A673 (cell line): ENCODE measurements at regions of chr11 and their contacts with region 1.

Region 1: DNA sequence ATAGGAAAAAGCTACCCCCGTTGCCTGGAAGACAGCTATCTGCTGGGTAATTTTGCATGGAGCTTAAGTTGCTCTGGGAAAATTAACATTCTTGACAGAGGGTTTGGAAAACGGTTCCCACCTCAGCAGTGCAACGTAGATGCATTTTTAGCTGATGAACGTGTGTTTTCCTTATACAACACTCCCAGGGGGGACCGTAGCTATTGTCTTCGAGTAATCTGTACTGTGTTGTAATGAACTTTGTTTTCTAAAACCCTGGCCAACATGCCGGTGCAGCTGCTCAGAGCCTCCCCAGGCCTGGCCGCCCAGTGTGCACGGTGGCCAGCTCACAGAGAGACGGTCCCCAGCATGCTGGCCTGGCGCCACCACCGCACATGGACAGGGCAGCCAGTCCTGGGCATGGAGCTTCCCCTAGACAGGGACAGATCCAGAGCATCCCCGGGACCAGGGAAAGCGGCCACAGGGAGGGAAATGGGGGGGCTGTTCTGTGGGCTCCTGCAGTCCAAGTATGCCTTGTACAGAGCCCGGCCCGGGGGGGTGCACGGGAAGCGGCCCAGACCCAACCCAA is 2.2 kb downstream of the TNNT3 start:
- DNase-seq: no peak
- H3K4me3 ChIP-seq: no peak overlapping the region
- H3K27ac ChIP-seq: no peak overlapping the region
- H3K4me1 ChIP-seq: no peaks in the 10 kb centered on the region
- H3K27me3 ChIP-seq: no peaks in the 10 kb centered on the region
- CTCF ChIP-seq: no peak

Region 2: GRCh38 chr11:1882519-1883238 is 39.0 kb before region 1 on chr11:
- CTCF ChIA-PET with region 1: interaction called, 4 read pairs
- POLR2A ChIA-PET with region 1: no interaction called
- intact Hi-C with region 1: loop called (anchors 5 kb)
- DNase-seq: peak; percentile 68
- H3K4me3 ChIP-seq: no peak overlapping the region
- H3K27ac ChIP-seq: no peak overlapping the region
- H3K4me1 ChIP-seq: no peaks in the 10 kb centered on the region
- H3K27me3 ChIP-seq: no peaks in the 10 kb centered on the region
- CTCF ChIP-seq: peak; percentile 86

Region 3: DNA sequence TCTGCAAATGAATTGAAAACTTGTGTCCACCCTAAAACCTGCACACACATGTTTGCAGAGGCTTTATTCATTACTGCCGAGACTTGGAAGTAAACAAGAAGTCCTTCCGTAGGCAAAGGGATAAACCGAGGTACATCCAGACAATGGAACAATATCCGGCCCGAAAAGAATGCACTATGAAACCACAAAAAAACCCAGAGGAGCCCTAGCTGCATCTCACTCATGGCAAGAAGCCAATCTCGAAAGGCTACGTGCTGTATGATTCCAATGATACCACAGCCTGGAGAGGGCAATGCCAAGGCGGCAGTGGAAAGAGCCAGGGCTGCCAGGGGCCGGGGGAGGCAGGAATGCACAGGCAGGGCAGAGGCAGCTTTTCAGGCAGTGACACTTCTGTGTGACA is 22.3 kb after region 1 on chr11:
- CTCF ChIA-PET with region 1: no interaction called
- POLR2A ChIA-PET with region 1: no interaction called
- intact Hi-C with region 1: no loop called
- DNase-seq: peak; percentile 17
- H3K4me3 ChIP-seq: no peak overlapping the region
- H3K27ac ChIP-seq: no peak overlapping the region
- H3K4me1 ChIP-seq: no peaks in the 10 kb centered on the region
- H3K27me3 ChIP-seq: no peaks in the 10 kb centered on the region
- CTCF ChIP-seq: no peak